ENCODE measurements at regions of chr4 and their contacts with region 1.

Region 1: GRCh38 chr4:174631901-174632758 is 109.8 kb upstream of the HPGD start:
- DNase-seq: peak in 1 of 2 experiments; percentile 44
- H3K4me3 ChIP-seq: no peak overlapping the region
- H3K4me3 Mint-ChIP-seq: no peak overlapping the region
- H3K27ac Mint-ChIP-seq: no peak overlapping the region
- H3K4me1 ChIP-seq: peaks cover 6% of the 10 kb centered on the region; the same call in 1 of the 2 replicates
- H3K4me1 Mint-ChIP-seq: peaks cover 6% of the 10 kb centered on the region
- H3K27me3 ChIP-seq: no peaks in the 10 kb centered on the region
- H3K27me3 Mint-ChIP-seq: no peaks in the 10 kb centered on the region
- CTCF ChIP-seq: peak; percentile 69 to 85

Region 2: DNA sequence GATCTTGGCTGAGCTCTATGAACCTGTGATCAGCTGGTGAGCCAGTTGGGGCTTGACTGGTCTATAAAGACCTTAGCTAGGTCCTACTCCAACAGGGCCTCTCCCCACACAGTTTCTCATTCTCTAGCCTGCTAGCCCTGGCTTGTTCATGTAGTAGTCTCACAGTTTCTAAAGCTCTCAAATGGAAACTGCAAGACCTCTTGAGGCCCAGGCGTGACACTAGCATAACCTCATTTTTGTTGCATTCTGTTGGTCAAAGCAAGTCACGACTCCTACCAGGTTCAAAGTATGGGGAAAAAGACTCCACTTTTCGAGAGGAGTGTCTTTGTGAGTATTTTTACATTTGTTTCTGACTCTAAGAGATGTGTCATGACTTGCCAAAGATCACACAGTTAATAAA is 297.5 kb before region 1 on chr4:
- CTCF ChIA-PET with region 1: no interaction called
- POLR2A ChIA-PET with region 1: no interaction called
- intact Hi-C with region 1: no loop called
- DNase-seq: no peak
- H3K4me3 ChIP-seq: no peak overlapping the region
- H3K4me3 Mint-ChIP-seq: no peak overlapping the region
- H3K27ac Mint-ChIP-seq: no peak overlapping the region
- H3K4me1 ChIP-seq: no peaks in the 10 kb centered on the region; the same call in 1 of the 2 replicates
- H3K4me1 Mint-ChIP-seq: no peaks in the 10 kb centered on the region
- H3K27me3 ChIP-seq: no peaks in the 10 kb centered on the region
- H3K27me3 Mint-ChIP-seq: no peaks in the 10 kb centered on the region
- CTCF ChIP-seq: no peak

Region 3: DNA sequence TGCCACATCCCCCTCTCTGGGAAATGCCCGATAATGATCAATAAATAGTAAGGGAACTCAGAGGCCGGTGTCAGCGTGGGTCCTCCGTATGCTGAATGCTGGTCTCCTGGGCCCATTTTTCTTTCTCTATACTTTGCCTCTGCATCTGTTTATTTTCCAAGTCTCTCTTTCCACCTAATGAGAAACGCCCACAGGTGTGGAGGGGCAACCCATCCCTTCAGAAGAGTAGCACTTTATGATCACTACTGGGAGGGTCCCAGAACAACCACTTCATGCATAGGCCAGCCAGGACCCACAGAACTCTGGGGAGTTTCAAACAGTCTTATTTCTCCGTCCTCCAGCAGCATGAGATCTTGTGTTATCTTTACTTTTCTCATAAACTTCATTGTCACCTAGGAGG is 248.3 kb before region 1 on chr4:
- CTCF ChIA-PET with region 1: interaction called, 3 read pairs
- POLR2A ChIA-PET with region 1: no interaction called
- intact Hi-C with region 1: loop called (anchors 1 kb)
- DNase-seq: peak; percentile 59 to 60
- H3K4me3 ChIP-seq: no peak overlapping the region
- H3K4me3 Mint-ChIP-seq: peak overlapping the region; percentile 68
- H3K27ac Mint-ChIP-seq: peak overlapping the region; percentile 94
- H3K4me1 ChIP-seq: peaks cover 77% of the 10 kb centered on the region
- H3K4me1 Mint-ChIP-seq: peaks cover 28% of the 10 kb centered on the region
- H3K27me3 ChIP-seq: no peaks in the 10 kb centered on the region
- H3K27me3 Mint-ChIP-seq: no peaks in the 10 kb centered on the region
- CTCF ChIP-seq: no peak

Region 4: DNA sequence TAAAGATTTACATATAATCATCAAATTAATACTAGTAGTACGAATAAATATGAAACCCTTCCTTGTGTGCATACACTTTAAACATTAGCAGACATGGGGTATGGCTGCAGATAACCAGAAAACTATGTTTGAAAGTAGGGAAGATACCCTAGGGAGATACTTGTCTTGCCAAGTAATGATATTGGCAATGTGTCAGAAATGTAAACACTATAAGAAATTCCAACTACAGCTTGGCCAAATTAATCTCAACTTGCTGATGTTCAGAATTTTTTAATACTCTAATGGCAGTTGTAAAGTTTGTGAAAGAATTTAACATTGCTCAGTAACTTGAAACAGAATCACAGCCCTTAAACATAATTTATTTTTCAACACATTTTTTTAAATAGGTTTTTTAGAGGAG is 82.4 kb before region 1 on chr4:
- CTCF ChIA-PET with region 1: no interaction called
- POLR2A ChIA-PET with region 1: no interaction called
- intact Hi-C with region 1: no loop called
- DNase-seq: no peak
- H3K4me3 ChIP-seq: no peak overlapping the region
- H3K4me3 Mint-ChIP-seq: no peak overlapping the region
- H3K27ac Mint-ChIP-seq: no peak overlapping the region
- H3K4me1 ChIP-seq: no peaks in the 10 kb centered on the region
- H3K4me1 Mint-ChIP-seq: peaks cover 6% of the 10 kb centered on the region
- H3K27me3 ChIP-seq: no peaks in the 10 kb centered on the region
- H3K27me3 Mint-ChIP-seq: no peaks in the 10 kb centered on the region
- CTCF ChIP-seq: no peak

Region 5: DNA sequence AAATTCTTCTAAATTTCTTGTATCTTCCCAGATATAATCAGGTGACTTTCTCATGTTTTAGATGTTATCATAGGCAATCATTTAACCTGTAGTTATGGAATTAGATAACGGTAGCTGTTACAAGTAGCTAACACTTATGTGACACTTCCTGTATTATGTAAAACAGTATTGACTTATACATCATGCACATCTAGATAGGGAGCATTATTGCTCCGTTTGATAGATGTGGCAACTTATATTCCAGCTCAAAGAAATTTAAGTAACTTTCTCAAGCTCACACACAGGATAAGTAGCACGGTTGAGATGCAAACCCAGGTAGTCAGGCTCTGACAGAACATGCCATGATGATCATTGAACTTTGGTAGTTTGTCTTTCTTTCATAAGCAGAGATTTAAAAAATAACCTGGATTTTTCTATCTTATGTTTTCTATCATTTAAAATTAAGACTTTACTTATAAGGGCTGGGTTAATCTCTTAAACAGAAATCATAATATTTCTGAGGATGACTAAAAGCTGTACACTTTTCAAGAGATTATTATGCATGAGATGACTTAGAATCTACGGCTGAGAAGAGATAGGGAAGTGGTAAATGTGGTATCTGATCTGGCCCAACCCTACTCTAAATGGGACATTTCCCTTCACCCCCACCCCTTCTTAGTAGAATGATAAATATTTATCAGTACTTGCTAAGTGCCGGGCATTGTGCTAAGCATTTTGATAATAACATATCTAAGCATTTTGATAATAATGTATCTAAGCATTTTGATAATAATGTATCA is 40.7 kb before region 1 on chr4:
- CTCF ChIA-PET with region 1: no interaction called
- POLR2A ChIA-PET with region 1: no interaction called
- intact Hi-C with region 1: no loop called
- DNase-seq: no peak
- H3K4me3 ChIP-seq: no peak overlapping the region
- H3K4me3 Mint-ChIP-seq: no peak overlapping the region
- H3K27ac Mint-ChIP-seq: no peak overlapping the region
- H3K4me1 ChIP-seq: no peaks in the 10 kb centered on the region
- H3K4me1 Mint-ChIP-seq: no peaks in the 10 kb centered on the region
- H3K27me3 ChIP-seq: no peaks in the 10 kb centered on the region
- H3K27me3 Mint-ChIP-seq: no peaks in the 10 kb centered on the region
- CTCF ChIP-seq: no peak

Region 6: GRCh38 chr4:174714393-174715211 is 82.5 kb after region 1 on chr4:
- CTCF ChIA-PET with region 1: no interaction called
- POLR2A ChIA-PET with region 1: no interaction called
- intact Hi-C with region 1: loop called (anchors 2 kb)
- DNase-seq: peak; percentile 50 to 65
- H3K4me3 ChIP-seq: no peak overlapping the region
- H3K4me3 Mint-ChIP-seq: no peak overlapping the region
- H3K27ac Mint-ChIP-seq: no peak overlapping the region
- H3K4me1 ChIP-seq: 0 out of 2 replicates have a peak, but pooled peaks cover 4% of the 10 kb centered on the region
- H3K4me1 Mint-ChIP-seq: peaks cover 8% of the 10 kb centered on the region
- H3K27me3 ChIP-seq: no peaks in the 10 kb centered on the region; the same call in 1 of the 2 replicates
- H3K27me3 Mint-ChIP-seq: peaks cover 5% of the 10 kb centered on the region
- CTCF ChIP-seq: peak; percentile 66 to 85

Region 7: GRCh38 chr4:175273991-175274753 is 642.0 kb after region 1 on chr4:
- CTCF ChIA-PET with region 1: no interaction called
- POLR2A ChIA-PET with region 1: no interaction called
- intact Hi-C with region 1: no loop called
- DNase-seq: no peak
- H3K4me3 ChIP-seq: no peak overlapping the region
- H3K4me3 Mint-ChIP-seq: no peak overlapping the region
- H3K27ac Mint-ChIP-seq: no peak overlapping the region
- H3K4me1 ChIP-seq: no peaks in the 10 kb centered on the region
- H3K4me1 Mint-ChIP-seq: no peaks in the 10 kb centered on the region
- H3K27me3 ChIP-seq: no peaks in the 10 kb centered on the region
- H3K27me3 Mint-ChIP-seq: no peaks in the 10 kb centered on the region
- CTCF ChIP-seq: no peak

Measured in Caco-2 (cell line).